ENCODE measurements at regions of chr14 and their contacts with region 1.

Region 1: DNA sequence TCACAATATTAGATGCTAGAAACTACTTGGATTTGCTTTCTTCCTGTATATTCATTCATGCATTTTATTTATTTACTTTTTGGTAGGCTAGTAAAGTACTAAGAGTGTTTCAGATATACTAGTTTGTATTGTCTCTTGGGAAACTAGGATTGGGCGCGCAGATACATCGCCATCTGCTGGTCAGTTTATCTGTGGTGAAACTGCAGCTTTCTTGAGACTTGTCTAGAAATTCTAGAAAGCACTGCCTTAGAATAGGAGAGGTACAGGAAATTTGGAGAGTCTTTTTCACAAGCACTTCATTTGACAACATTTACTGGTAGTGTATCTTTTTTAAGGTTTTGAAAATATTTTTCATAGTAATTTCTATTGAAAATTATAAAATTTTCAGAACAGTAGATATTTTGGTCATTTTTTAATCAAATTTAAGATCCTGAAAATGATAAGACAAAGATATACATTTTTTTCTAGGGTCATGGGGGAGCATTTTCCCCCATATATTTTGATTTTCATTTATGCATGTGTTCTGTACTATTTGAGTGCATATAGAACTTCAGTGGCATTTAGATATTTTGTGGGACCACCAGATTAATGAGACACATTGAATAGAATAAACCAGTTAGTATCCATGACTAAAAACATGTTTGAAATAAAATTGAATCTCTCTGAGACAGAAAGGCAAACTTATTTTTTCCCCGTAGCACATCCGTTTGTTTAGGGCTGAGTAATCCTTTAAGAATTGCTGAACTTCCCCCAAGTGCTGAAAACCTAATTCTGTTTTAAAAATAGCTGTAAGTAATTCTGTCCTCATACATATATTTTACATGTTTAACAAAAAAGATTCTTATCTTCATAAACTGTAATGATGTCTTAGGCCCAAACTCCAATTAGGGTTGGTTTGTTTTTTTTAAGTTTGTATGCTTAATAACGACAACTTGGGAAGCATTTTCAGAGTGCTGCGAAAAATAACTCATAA is 44.5 kb downstream of the SLC38A6 start:
- DNase-seq: peak; percentile 62 to 65
- H3K4me3 ChIP-seq: no peak overlapping the region
- H3K27ac ChIP-seq: peak overlapping the region; percentile 38
- H3K4me1 ChIP-seq: peaks cover 9% of the 10 kb centered on the region
- H3K27me3 ChIP-seq: no peaks in the 10 kb centered on the region
- CTCF ChIP-seq: peak; percentile 93

Region 2: DNA sequence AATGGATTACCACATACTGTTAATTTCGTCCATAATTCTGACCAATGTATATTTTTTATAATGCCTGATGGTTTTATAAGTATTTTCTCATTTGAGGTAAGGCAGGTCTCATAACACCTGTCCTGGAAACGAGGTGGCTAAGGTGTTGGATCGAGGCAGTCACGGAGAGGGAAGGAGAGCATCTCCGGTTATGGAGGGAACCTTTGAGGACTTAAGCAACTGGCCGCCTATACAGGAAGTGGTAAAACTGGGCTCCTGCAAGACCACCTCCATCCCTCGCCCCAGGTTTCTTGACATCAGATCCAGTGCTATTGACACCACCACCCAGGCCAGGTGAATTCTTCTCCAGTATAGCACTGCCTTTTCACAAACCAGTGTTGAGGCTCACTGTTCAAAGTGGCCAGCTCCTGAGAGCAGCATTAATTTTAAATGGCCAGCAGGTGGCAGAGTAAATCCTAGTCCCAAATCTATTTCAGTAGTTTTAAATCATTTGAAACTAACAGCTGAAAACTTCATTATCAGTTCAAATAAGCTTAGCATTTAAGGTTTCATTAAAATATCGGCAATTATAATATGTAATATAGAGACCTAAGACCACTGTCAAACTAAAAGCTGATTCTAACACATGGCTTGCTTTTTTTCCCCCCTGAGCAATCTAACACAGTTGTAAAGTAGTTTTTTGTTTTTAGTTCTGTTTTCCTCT is 675.7 kb before region 1 on chr14:
- CTCF ChIA-PET with region 1: no interaction called
- POLR2A ChIA-PET with region 1: no interaction called
- intact Hi-C with region 1: loop called (anchors 10 kb)
- DNase-seq: peak in 1 of 2 experiments; percentile 29
- H3K4me3 ChIP-seq: no peak overlapping the region
- H3K27ac ChIP-seq: no peak overlapping the region
- H3K4me1 ChIP-seq: no peaks in the 10 kb centered on the region
- H3K27me3 ChIP-seq: no peaks in the 10 kb centered on the region
- CTCF ChIP-seq: peak; percentile 87

Region 3: DNA sequence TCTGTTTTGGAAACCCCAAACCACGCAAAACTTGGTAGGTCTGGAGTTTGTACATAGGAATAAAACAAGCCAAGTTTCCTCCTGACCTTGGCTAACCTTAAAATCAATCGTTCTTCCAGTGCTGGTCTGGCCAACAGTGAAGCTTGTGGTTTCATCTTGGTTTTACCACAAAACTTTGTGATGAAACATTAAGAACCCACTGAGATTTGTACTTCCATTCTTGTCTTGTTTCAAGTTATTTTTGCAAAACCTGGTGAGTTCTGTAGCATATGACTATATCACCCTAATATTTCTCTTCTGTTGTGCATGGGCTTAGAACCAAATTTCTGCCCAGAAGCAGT is 402.6 kb before region 1 on chr14:
- CTCF ChIA-PET with region 1: interaction called, 3 read pairs
- POLR2A ChIA-PET with region 1: no interaction called
- intact Hi-C with region 1: loop called (anchors 1 kb)
- DNase-seq: no peak
- H3K4me3 ChIP-seq: no peak overlapping the region
- H3K27ac ChIP-seq: no peak overlapping the region
- H3K4me1 ChIP-seq: no peaks in the 10 kb centered on the region
- H3K27me3 ChIP-seq: no peaks in the 10 kb centered on the region
- CTCF ChIP-seq: no peak

Region 4: DNA sequence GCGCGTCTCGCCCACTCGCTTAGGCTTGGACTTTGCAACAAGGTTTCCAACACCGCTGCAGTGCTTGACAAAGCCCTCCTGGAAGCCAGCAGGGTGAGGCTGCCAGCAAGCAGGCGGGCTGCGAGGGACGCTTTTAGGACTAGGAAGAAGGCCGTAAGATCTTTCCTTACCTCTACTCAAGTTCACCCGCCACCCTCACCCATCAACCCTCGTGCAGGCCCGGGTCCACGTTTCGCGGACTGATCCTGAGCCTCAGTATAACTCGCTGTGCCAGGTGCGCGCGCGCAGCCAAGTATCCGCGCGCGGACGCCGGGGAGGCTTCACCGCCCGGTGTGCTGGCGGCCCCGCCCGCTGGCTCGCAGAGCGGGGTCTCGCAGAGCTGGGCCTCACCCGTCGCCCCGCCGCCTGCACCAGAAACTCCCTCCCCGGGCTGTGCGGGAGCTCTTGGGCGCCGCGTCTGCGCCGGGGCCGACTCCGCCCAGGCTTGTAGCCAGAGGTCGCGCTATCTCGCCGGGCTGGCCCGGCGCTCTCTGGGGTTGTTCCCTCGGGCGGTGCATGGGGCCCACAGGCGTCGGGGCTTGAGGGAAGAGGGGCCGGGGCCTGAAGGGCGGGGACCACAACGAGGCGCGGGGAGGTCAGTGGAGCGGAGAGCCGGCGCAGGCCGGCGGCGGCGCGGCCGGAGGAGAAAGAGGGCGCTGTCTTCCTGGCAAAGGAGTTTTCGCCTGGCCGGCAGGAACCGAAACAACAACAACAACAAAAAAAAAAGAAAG is 368.7 kb before region 1 on chr14:
- CTCF ChIA-PET with region 1: no interaction called
- POLR2A ChIA-PET with region 1: no interaction called
- intact Hi-C with region 1: loop called (anchors 1 kb)
- DNase-seq: peak in 1 of 2 experiments; percentile 80
- H3K4me3 ChIP-seq: peak overlapping the region; percentile 63
- H3K27ac ChIP-seq: no peak overlapping the region
- H3K4me1 ChIP-seq: 0 out of 2 replicates have a peak, but pooled peaks cover 6% of the 10 kb centered on the region
- H3K27me3 ChIP-seq: no peaks in the 10 kb centered on the region
- CTCF ChIP-seq: peak; percentile 64

Region 5: GRCh38 chr14:60980811-60981632 is 44.5 kb before region 1 on chr14 and contains the starts of genes SLC38A6 and TRMT5:
- CTCF ChIA-PET with region 1: no interaction called
- POLR2A ChIA-PET with region 1: no interaction called
- intact Hi-C with region 1: loop called (anchors 5 kb)
- DNase-seq: peak; percentile 92 to 95
- H3K4me3 ChIP-seq: peak within 1 kb of the TSS; percentile 99
- H3K27ac ChIP-seq: peak within 1 kb of the TSS; percentile 78
- H3K4me1 ChIP-seq: peaks cover 36% of the 10 kb centered on the region
- H3K27me3 ChIP-seq: no peaks in the 10 kb centered on the region
- CTCF ChIP-seq: no peak
- total RNA-seq, gene SLC38A6: 44.7 and 45.5 TPM in 2 replicates
- total RNA-seq, gene TRMT5: 17.3 and 17.6 TPM in 2 replicates

Region 6: DNA sequence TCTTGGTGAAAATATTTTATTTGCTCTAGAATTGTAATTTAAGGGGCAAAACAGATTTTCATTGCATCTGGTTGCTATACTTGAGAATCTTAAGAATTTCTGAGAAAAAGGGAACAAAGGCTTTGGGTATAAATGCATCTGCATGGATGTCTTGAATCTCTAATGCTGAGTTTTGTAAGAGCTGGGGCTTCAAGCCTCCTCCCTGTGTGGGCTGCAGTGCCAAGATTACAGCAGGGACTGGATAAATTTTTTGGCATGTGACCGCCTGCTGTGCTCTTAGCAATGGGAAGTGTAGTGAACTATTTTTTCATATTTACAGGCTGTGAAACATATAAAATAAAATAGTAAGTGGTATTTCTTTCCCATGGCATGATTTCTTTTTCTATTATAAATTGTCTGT is 25.5 kb after region 1 on chr14:
- CTCF ChIA-PET with region 1: no interaction called
- POLR2A ChIA-PET with region 1: no interaction called
- intact Hi-C with region 1: no loop called
- DNase-seq: no peak
- H3K4me3 ChIP-seq: no peak overlapping the region
- H3K27ac ChIP-seq: no peak overlapping the region
- H3K4me1 ChIP-seq: no peaks in the 10 kb centered on the region
- H3K27me3 ChIP-seq: no peaks in the 10 kb centered on the region
- CTCF ChIP-seq: no peak

Region 7: DNA sequence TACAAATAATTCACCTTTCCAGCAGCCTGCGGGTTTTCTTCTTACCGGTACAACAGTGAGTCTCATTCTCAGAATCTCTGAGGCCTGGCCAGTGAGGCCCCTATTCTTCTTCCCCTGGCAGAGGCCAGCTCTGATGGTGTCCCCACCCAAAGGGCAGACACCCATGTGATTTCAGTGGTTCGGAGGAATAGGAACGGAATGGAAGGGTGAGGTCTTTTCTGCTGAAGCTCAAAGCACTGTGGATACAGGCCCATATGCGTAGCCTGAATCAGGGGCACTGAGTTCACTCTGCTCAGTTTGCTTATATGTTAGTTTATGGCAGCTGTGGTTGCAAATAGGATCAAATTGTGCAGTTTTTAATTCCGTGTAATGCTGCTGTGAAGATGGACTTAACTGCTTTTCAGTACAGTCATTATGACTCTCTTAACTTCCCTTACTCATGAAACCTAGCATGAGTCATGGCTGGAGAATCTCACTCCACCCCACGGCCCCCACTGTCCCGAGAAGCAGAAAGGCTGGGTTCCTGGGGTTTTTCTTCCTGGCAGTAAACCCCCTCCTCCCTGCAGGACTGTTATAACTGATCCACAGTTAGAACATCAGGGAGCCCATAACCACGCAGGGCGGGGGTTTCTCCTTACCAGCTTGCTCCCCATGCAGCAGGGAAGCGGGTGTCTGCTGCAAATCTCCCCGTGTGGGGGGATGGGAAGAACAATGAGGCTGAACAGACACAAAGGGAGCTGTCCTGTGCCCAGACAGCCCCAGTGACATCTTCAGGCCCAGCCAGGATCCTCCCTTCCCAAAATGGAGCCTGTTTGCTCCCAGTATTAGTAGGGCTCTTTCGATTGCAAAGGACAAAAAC is 78.2 kb after region 1 on chr14:
- CTCF ChIA-PET with region 1: no interaction called
- POLR2A ChIA-PET with region 1: no interaction called
- intact Hi-C with region 1: no loop called
- DNase-seq: peak; percentile 85 to 89
- H3K4me3 ChIP-seq: 0 out of 2 replicates have a peak overlapping the region, but pooled peaks have one; percentile 1
- H3K27ac ChIP-seq: peak overlapping the region; percentile 98
- H3K4me1 ChIP-seq: peaks cover 37% of the 10 kb centered on the region
- H3K27me3 ChIP-seq: no peaks in the 10 kb centered on the region
- CTCF ChIP-seq: no peak

Region 8: GRCh38 chr14:61188978-61189808 is 163.7 kb after region 1 on chr14:
- CTCF ChIA-PET with region 1: no interaction called
- POLR2A ChIA-PET with region 1: no interaction called
- intact Hi-C with region 1: loop called (anchors 2 kb)
- DNase-seq: peak; percentile 68 to 84
- H3K4me3 ChIP-seq: peak overlapping the region; percentile 68
- H3K27ac ChIP-seq: no peak overlapping the region
- H3K4me1 ChIP-seq: no peaks in the 10 kb centered on the region; the same call in 1 of the 2 replicates
- H3K27me3 ChIP-seq: no peaks in the 10 kb centered on the region
- CTCF ChIP-seq: peak; percentile 75

Measured in PC-9 (cell line).